GM10248 (cell line): ENCODE measurements at regions of chr3 and their contacts with region 1.

Region 1: GRCh38 chr3:132008837-132009626 is 25.8 kb downstream of the CPNE4 start:
- DNase-seq: no peak
- CTCF ChIP-seq: no peak

Region 2: DNA sequence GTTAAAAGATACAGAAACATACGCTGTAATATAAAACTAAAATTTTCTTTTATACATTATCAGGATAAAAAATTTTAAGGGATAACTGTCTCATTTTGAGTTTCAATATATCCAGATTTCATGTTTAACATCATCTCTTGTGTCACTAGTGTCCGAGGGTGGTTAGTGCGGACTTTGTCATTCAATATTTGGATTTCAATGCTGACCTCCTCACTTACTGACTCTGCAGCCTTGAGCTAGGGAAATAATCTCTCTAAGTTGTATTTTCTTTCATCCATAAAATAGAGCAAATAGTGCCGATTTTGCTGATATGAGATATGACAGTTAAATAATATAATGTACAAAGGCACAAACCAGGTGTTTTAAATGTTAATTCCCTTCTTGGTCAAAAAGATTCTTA is 177.4 kb before region 1 on chr3:
- CTCF ChIA-PET with region 1: no interaction called
- POLR2A ChIA-PET with region 1: no interaction called
- DNase-seq: no peak
- CTCF ChIP-seq: no peak

Region 3: GRCh38 chr3:132029182-132029902 is 20.3 kb after region 1 on chr3:
- CTCF ChIA-PET with region 1: interaction called, 25 read pairs
- POLR2A ChIA-PET with region 1: no interaction called
- DNase-seq: peak; percentile 73
- CTCF ChIP-seq: peak; percentile 83